Activated CD8-positive, alpha-beta T cell treated with anti-CD3 and anti-CD28 coated beads, Interleukin-2, amount 10 ng/mL, durations not matched to agents 7 days and 5 days (primary cell): ENCODE measurements at regions of chr14 and their contacts with region 1.

Region 1: DNA sequence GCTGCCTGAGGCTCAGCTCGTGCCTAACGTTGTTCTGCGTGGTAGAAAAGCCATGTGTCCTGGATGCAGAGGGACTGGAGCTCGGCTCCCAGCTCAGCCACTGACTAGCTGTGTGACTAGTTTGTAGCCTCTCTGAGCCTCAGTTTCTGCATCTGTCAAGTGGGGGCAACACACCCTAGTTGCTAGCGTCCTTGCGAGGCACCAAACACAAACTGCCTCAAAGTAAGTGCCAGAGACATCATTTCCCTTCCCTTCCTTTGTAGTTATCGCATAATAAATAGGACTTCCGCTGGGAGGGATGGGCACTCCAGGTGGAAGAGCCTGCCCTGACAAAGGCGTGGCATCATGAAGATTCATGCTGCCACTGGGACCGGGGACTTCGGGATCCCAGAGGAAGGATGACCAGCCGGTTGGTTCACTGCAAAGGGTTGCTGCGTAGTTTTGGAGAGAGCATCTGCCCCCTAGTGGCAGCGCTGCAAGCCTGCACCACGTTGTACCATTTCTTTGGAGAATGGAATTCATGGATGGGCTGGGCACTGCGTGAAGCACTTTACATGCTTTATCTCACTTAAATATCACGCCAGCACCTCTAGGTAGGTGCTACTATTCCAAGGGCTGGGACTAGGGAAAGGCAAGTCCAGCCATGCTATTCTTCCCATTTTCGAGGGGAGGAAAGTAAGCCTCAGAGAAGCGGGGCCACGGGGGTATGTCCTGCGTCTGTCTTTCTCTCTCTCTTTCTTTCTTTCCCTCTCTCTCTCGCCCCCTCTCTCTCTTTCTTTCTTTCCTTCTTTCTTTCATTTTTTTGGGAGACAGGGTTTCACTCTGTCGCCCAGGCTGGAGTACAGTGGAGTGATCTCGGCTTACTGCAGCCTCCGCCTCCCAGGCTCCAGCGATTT is 4.6 kb downstream of the CCDC197 start:
- DNase-seq: peak; percentile 70
- ATAC-seq: peak; percentile 83
- H3K4me3 Mint-ChIP-seq: no peak overlapping the region
- H3K27ac Mint-ChIP-seq: peak overlapping the region; percentile 50
- H3K4me1 Mint-ChIP-seq: peaks cover 40% of the 10 kb centered on the region
- H3K27me3 Mint-ChIP-seq: peaks cover 13% of the 10 kb centered on the region

Region 2: GRCh38 chr14:93923626-93924025 is 78.1 kb before region 1 on chr14:
- CTCF ChIA-PET with region 1: no interaction called
- POLR2A ChIA-PET with region 1: no interaction called
- DNase-seq: no peak
- ATAC-seq: no peak
- H3K4me3 Mint-ChIP-seq: no peak overlapping the region
- H3K27ac Mint-ChIP-seq: no peak overlapping the region
- H3K4me1 Mint-ChIP-seq: no peaks in the 10 kb centered on the region
- H3K27me3 Mint-ChIP-seq: peaks cover 7% of the 10 kb centered on the region

Region 3: DNA sequence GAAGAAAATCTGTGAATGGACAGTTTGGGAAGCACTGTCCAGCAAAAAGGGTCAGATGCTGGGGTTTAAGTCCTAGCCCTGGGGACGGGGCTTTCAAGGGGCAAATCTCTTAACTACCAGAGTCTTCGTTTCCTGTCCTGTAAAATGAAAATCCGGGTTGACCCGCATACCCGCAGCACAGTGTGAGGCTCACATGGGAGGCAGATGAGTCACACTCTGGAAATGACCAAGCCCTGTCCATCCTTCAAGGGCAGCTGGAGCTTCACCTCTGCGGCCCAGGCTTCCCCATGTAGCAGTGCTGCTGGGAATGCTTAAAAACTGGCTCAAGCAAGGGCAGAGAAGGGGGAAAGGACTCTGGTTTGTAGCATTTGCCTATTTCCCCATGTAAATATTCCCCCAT is 55.6 kb before region 1 on chr14:
- CTCF ChIA-PET with region 1: interaction called, 233 read pairs
- POLR2A ChIA-PET with region 1: interaction called, 29 read pairs
- DNase-seq: no peak
- ATAC-seq: no peak
- H3K4me3 Mint-ChIP-seq: no peak overlapping the region
- H3K27ac Mint-ChIP-seq: no peak overlapping the region
- H3K4me1 Mint-ChIP-seq: peaks cover 7% of the 10 kb centered on the region
- H3K27me3 Mint-ChIP-seq: no peaks in the 10 kb centered on the region

Region 4: GRCh38 chr14:93953263-93953662 is 48.5 kb before region 1 on chr14:
- CTCF ChIA-PET with region 1: interaction called, 21 read pairs
- POLR2A ChIA-PET with region 1: interaction called, 8 read pairs
- DNase-seq: no peak
- ATAC-seq: no peak
- H3K4me3 Mint-ChIP-seq: peak overlapping the region; percentile 81
- H3K27ac Mint-ChIP-seq: peak overlapping the region; percentile 62
- H3K4me1 Mint-ChIP-seq: peaks cover 72% of the 10 kb centered on the region
- H3K27me3 Mint-ChIP-seq: no peaks in the 10 kb centered on the region

Region 5: DNA sequence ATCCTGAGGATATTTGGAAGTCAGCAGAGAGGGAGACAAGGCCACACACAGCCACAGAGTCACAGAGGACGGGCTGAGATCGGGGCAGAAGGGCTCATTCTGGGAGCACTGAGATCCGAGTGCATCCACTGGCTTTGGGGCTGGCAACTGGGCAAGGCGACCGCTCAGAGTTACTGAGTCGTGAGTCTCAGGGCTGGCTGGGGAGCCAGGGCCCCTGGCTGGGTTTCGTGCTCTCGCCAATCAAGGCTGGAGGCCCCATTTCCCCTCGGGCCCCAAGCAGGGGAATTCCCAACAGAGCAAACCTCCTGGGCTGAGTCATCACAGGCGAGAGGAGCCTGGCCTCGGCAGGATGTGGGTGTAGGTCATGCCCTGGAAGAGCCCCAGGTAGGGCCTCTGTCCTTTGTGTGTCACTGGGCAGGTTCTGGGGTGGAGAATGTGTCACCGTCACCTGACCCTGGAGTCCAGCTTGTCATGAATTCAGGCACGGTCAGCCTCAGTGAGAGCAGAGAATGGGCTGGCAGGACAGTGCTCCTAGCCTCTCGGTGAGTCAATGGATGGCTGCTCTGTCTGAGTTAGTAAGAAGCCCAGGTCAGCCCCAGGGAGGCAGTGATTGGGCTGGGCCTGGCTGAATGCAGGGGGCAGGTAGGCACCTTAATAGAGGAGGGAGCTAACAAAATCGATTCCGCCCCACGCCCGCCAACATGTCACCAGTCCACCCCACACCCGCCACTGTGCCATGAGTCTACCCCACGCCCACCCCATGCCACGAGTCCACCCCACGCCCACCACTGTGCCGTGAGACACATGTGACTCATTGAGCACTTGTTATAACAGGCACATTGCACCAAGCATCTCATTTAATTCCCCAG is 42.3 kb before region 1 on chr14:
- CTCF ChIA-PET with region 1: interaction called, 11 read pairs
- POLR2A ChIA-PET with region 1: interaction called, 11 read pairs
- DNase-seq: peak; percentile 95
- ATAC-seq: peak; percentile 76
- H3K4me3 Mint-ChIP-seq: peak overlapping the region; percentile 71
- H3K27ac Mint-ChIP-seq: peak overlapping the region; percentile 98
- H3K4me1 Mint-ChIP-seq: peaks cover 97% of the 10 kb centered on the region
- H3K27me3 Mint-ChIP-seq: no peaks in the 10 kb centered on the region

Region 6: DNA sequence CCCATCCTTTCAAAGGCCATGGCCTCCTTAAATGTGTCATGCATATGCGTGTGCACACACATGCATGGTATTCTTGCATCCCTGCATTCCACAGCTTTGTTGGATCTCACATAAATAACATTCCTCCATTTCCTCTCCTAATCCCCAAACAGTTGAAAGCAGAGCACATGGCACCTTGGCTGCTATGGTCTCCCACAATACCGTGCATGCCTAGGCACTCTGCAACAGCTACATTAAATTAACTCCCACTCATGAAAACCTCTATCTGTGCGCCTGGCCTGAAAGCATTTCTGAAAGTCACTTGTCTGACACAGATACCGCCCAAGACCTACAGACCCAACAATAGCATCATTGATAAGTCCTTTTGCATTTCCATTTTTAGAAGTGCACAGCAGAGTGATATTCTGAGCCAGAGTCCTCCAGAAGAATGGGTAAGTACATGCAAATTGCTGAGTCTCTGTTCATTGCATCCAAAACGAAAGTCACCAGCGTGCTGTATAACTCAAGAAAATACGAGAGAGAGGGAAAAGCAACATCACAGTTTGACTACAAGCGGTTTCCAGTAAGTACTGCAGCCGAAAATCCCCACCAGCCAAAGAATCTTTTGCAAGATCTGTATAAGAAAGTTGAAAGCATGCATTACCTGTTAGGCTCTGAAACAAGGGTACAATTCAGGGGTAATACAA is 25.8 kb before region 1 on chr14:
- CTCF ChIA-PET with region 1: interaction called, 68 read pairs
- POLR2A ChIA-PET with region 1: interaction called, 9 read pairs
- DNase-seq: no peak
- ATAC-seq: no peak
- H3K4me3 Mint-ChIP-seq: peak overlapping the region; percentile 48
- H3K27ac Mint-ChIP-seq: peak overlapping the region; percentile 82
- H3K4me1 Mint-ChIP-seq: peaks cover 94% of the 10 kb centered on the region
- H3K27me3 Mint-ChIP-seq: no peaks in the 10 kb centered on the region

Region 7: GRCh38 chr14:93984987-93985410 is 16.8 kb before region 1 on chr14:
- CTCF ChIA-PET with region 1: interaction called, 68 read pairs
- POLR2A ChIA-PET with region 1: no interaction called
- DNase-seq: no peak
- ATAC-seq: no peak
- H3K4me3 Mint-ChIP-seq: no peak overlapping the region
- H3K27ac Mint-ChIP-seq: no peak overlapping the region
- H3K4me1 Mint-ChIP-seq: peaks cover 13% of the 10 kb centered on the region
- H3K27me3 Mint-ChIP-seq: no peaks in the 10 kb centered on the region

Region 8: DNA sequence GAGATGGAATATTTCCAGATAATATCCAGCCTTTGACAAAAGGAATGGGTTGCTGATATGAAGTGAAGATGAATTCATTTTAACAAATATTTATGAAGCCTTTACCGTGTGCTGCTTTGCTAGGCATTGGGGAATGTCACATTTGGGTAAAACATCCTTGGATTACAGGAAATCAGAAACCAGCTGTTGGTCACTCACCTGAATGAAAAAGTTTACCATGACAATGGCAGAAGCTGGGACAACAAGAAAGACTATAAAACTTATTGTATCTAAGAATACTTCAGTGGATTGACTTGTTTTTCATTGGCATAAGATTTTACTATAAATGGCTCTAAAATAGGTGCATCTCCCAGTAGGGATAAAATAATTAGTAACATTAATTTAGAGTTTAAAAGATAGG is 192.0 kb after region 1 on chr14:
- CTCF ChIA-PET with region 1: no interaction called
- POLR2A ChIA-PET with region 1: no interaction called
- DNase-seq: no peak
- ATAC-seq: no peak
- H3K4me3 Mint-ChIP-seq: no peak overlapping the region
- H3K27ac Mint-ChIP-seq: no peak overlapping the region
- H3K4me1 Mint-ChIP-seq: no peaks in the 10 kb centered on the region
- H3K27me3 Mint-ChIP-seq: peaks cover 32% of the 10 kb centered on the region